ENCODE measurements at regions of chr19 and their contacts with region 1.

Region 1: GRCh38 chr19:1113033-1113985 is 9.5 kb downstream of the GPX4 start:
- DNase-seq: peak; percentile 88
- ATAC-seq: peak; percentile 87
- H3K4me3 Mint-ChIP-seq: no peak overlapping the region
- H3K27ac Mint-ChIP-seq: no peak overlapping the region
- H3K4me1 Mint-ChIP-seq: peaks cover 3% of the 10 kb centered on the region
- H3K27me3 Mint-ChIP-seq: no peaks in the 10 kb centered on the region

Region 2: GRCh38 chr19:1131738-1132551 is 18.6 kb after region 1 on chr19:
- CTCF ChIA-PET with region 1: interaction called, 38 read pairs
- DNase-seq: peak; percentile 93
- ATAC-seq: peak; percentile 64
- H3K4me3 Mint-ChIP-seq: peak overlapping the region; percentile 89
- H3K27ac Mint-ChIP-seq: peak overlapping the region; percentile 91
- H3K4me1 Mint-ChIP-seq: peaks cover 33% of the 10 kb centered on the region
- H3K27me3 Mint-ChIP-seq: no peaks in the 10 kb centered on the region

Region 3: DNA sequence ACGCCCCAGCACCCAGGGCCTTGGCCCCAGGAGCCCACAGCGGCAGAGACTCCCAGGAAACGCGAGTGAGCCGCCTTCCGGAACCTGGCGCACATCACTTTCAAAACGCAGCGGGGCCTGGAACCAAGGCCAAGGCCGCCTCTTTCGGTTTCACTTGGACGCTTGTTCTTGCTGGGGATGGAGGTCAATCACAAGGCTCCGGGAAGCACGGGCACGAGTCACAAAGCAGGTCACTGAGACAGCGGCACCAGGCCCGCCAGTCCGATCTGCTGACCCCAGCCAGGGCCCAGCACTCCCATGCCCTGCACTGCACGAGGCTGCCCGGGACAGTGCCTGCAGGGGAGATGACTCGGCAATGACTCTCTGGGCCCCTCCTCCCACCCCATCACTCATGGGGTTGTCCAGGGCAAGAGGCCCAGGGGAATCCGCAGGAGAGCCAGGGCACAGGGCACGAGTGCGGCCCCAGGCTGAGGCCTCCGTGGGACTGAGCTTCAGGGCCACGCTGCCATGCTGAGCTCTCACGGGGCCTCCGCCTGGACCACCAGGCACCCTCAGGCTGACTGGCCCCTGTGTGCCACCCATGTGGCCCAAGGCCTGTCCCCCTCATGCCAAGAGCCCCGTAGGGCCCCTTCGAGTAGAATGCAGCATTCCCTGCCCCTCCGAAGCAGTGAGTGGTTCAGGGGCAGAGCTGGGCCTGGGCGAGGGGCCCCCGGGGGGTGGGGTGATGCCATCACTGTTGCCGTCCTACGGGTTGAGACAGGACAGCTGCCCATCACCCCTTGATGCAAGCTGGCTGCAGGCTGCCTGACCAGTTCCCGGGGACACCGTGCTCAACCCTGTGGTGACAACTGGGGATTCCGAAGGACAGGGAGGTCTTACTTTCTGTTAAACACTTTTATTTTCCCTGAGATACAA is 55.8 kb after region 1 on chr19:
- CTCF ChIA-PET with region 1: no interaction called
- DNase-seq: no peak
- ATAC-seq: no peak
- H3K4me3 Mint-ChIP-seq: no peak overlapping the region
- H3K27ac Mint-ChIP-seq: no peak overlapping the region
- H3K4me1 Mint-ChIP-seq: peaks cover 28% of the 10 kb centered on the region
- H3K27me3 Mint-ChIP-seq: no peaks in the 10 kb centered on the region

Region 4: DNA sequence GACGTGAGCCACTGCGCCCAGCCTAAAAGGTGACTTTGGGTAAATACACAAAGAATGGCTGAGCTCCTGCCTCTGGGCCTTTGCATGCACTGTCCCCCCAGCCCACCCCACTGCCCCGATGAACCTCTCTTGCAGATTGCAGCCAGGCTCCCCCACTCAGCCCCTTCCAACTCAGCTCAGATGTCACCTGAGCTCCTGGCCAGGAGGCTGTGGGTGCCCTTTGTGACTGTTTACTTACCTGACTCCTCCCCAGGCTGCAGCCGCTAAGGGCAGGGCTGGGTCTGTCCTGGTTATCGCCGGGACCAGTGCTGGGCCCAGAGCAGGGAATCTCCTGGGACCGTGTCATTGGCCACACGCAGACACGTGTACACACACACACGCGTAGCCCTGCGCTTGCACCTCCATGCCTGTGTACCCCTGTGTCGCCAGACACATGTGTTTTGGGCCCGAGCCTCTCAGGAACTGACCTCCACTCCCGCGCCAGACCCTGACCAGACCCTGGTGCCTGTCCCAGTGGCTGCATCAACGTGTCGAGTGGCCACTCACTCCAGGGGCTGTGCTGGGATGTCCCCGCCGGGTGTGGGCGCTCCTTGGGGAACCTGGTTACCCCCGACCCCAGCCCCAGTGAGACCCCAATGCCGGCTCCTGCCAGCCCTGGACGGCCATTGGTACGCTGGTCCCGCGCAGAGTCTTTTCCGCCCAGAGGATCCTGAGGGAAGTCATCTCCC is 191.1 kb after region 1 on chr19:
- CTCF ChIA-PET with region 1: no interaction called
- DNase-seq: no peak
- ATAC-seq: peak; percentile 9
- H3K4me3 Mint-ChIP-seq: no peak overlapping the region
- H3K27ac Mint-ChIP-seq: no peak overlapping the region
- H3K4me1 Mint-ChIP-seq: no peaks in the 10 kb centered on the region
- H3K27me3 Mint-ChIP-seq: no peaks in the 10 kb centered on the region

Measured in activated CD8-positive, alpha-beta memory T cell treated with anti-CD3 and anti-CD28 coated beads, Interleukin-2, amount 10 ng/mL, durations not matched to agents 7 days and 5 days (primary cell).